Activated CD4-positive, alpha-beta memory T cell treated with anti-CD3 and anti-CD28 coated beads, Interleukin-2, amount 10 ng/mL, durations not matched to agents 7 days and 5 days (primary cell): ENCODE measurements at regions of chr12 and their contacts with region 1.

Region 1: DNA sequence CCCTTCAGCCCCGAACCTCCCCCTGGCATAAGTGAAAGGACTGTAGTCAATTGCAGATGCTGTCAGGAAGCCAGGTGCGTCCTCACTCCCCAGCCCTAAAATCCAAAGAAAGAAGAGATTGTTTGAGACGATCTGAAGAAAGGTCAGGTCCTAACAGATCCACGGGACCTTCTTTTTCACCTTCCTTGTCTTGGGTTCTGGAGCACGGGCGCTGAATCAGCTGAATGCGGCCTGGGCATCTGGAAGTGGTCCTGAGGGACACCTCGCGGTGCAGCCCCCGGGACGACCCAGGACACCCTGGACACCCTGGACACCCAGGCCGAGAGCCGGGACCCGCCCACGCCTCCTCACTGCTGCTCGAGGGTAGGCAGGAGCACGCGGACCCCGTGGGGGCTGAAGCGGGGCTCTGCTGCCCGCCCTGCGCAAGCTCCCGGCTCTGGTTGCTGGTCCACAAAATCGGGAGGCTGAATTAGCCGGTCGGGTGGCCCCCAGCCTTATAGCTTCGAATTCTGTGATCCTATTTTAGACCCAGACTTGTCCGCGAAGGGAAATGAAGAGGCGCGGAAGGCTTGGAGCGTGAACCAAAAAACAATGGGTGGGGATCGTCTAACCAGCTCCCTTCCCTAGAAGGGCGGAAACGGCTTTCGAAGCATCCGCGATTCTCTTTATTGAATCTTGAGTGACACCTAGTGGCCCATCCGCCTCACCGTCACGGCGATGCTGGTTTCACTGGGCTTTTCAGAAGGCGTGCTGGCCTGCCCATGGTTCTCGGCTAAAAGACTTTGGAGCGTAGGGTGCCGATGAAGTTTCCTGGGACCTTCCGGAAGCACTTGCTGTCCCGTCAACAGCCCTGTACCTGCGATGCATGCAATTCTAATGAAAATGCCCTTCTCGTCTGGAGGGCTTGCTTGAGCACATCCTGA is 46.4 kb upstream of the PLXNC1 start:
- DNase-seq: peak; percentile 91
- H3K4me3 Mint-ChIP-seq: peak overlapping the region; percentile 83
- H3K27ac Mint-ChIP-seq: peak overlapping the region; percentile 80
- H3K4me1 Mint-ChIP-seq: peaks cover 43% of the 10 kb centered on the region
- H3K27me3 Mint-ChIP-seq: peaks cover 12% of the 10 kb centered on the region

Region 2: DNA sequence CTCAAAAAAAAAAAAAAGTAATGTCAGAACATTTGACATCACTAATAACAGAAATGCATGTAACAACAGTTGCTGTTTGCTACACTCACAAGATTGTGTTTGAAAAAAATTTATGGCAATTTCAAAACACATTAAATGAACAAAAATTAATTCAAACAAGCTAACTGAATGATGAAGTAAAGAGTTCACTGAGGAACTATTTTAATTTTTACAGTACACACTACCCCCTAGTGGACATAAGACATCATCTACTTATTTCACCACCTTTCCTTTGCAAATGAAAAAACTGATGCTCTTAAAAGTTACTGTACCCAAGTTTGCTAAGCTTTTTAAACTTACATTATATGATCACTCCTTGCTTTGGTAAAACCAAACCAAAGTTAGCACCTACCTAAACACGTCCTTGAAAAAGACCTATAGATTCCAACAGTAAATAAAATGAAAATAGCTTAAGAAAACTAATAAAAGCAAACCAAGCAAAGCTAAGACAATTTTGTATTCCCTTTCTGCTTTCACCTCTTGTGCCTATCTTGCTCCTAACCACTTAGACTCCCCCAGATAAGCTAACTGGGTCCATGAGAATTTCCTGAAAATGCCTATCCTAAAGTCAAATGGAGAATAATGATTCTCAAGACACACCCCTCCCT is 682.5 kb before region 1 on chr12:
- CTCF ChIA-PET with region 1: interaction called, 22 read pairs
- POLR2A ChIA-PET with region 1: interaction called, 6 read pairs
- DNase-seq: no peak
- H3K4me3 Mint-ChIP-seq: no peak overlapping the region
- H3K27ac Mint-ChIP-seq: no peak overlapping the region
- H3K4me1 Mint-ChIP-seq: peaks cover 83% of the 10 kb centered on the region
- H3K27me3 Mint-ChIP-seq: no peaks in the 10 kb centered on the region

Region 3: DNA sequence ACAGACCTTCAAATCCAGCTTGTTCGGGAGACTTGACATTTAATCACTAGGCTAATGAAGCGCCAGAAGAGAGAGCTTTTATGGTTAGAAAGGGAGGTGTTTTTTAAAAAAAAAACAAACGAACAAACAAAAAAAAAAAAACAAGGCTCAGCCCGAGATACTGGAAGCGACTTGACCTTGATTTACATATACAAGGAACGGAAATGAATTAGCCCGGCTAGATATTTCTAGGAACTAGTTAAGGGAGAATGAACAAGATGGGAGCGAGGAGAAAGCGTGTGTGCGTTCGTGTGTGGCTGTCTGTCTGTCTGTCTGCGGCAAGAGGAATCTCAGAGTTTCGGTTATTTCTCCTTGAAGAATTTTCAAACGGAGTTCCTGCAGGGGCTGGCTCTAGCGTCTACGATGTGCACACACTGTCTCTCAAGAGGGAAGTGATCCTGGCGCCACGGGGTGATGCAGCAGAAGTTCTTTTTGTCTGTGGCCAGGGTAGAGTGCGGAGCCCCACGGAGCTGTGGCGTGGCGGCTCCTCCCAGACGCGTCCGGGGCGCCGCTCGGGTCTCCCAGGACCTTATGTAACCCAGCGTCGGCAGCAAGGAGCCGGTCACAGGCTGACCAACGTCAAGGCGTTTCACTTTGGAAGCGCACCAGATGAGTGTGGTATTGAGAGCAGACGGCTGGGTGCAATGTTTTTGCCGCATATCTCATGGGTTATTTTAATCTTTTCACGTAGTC is 510.7 kb before region 1 on chr12:
- CTCF ChIA-PET with region 1: interaction called, 30 read pairs
- POLR2A ChIA-PET with region 1: interaction called, 3 read pairs
- DNase-seq: peak; percentile 52
- H3K4me3 Mint-ChIP-seq: peak overlapping the region; percentile 87
- H3K27ac Mint-ChIP-seq: peak overlapping the region; percentile 61
- H3K4me1 Mint-ChIP-seq: peaks cover 51% of the 10 kb centered on the region
- H3K27me3 Mint-ChIP-seq: peaks cover 32% of the 10 kb centered on the region

Region 4: GRCh38 chr12:93785262-93786010 is 316.6 kb before region 1 on chr12:
- CTCF ChIA-PET with region 1: interaction called, 19 read pairs
- POLR2A ChIA-PET with region 1: interaction called, 7 read pairs
- DNase-seq: peak; percentile 62
- H3K4me3 Mint-ChIP-seq: no peak overlapping the region
- H3K27ac Mint-ChIP-seq: peak overlapping the region; percentile 66
- H3K4me1 Mint-ChIP-seq: peaks cover 42% of the 10 kb centered on the region
- H3K27me3 Mint-ChIP-seq: no peaks in the 10 kb centered on the region

Region 5: DNA sequence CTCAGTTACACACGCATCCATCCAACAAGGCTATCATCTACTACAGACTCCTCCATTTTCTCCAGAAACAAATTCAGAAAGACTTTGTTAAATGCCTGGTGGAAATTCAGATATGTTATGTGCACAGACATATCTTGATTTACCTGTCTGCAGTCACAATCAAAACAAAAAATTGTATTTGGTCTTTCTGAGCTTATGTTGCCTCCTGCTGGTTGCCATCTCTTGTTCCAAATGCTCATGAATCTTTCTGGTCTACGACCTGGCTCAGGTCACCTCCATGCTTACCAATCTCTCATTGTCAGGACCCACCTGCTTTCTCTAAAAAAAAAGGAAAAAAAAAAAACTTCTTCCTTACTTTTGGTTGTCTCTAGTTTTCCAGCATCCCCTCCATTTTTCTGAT is 122.8 kb before region 1 on chr12:
- CTCF ChIA-PET with region 1: interaction called, 84 read pairs
- POLR2A ChIA-PET with region 1: interaction called, 7 read pairs
- DNase-seq: peak; percentile 37
- H3K4me3 Mint-ChIP-seq: no peak overlapping the region
- H3K27ac Mint-ChIP-seq: no peak overlapping the region
- H3K4me1 Mint-ChIP-seq: peaks cover 30% of the 10 kb centered on the region
- H3K27me3 Mint-ChIP-seq: peaks cover 6% of the 10 kb centered on the region

Region 6: DNA sequence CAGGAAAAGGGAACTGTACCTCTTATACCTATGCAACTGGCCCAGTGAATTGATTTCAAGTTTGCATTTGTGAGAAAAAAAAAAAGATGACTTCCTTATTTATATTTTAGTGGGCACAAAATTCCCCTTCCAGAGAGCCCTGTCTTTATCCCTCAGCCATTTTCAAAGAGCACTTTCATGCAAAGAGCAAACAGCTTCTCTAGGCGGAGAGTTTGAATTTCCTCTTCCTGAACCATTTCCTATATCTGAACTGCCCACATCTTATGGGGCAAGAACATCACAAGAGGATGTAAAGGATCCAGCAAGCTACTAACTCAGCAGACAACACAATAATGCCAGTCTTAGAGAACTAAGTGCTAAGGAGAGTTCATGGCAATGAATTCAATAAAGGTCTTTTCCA is 24.1 kb after region 1 on chr12:
- CTCF ChIA-PET with region 1: interaction called, 59 read pairs
- POLR2A ChIA-PET with region 1: interaction called, 12 read pairs
- DNase-seq: no peak
- H3K4me3 Mint-ChIP-seq: peak overlapping the region; percentile 20
- H3K27ac Mint-ChIP-seq: peak overlapping the region; percentile 43
- H3K4me1 Mint-ChIP-seq: peaks cover 59% of the 10 kb centered on the region
- H3K27me3 Mint-ChIP-seq: peaks cover 16% of the 10 kb centered on the region

Region 7: DNA sequence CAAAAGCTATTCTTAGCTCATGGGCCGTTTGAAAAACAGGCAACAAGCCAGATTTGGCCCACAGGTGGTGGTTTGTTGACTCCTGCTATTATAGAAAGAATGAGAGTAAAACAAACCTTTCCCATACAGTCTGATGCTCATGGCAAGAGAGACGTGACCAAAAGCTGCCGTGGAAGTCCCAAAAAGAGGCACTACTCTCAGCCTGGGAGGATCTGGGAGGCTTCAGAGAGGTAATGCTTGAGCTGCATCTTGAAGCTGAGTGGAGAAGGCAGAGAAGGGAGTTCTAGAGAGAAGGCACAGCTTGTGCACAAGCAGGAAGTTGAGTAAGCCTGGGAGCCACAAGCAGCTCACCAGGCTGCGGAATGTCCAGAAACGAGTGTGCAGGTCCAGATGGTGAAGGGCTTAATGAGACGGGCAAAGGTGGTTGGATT is 56.0 kb after region 1 on chr12:
- CTCF ChIA-PET with region 1: no interaction called
- POLR2A ChIA-PET with region 1: no interaction called
- DNase-seq: no peak
- H3K4me3 Mint-ChIP-seq: no peak overlapping the region
- H3K27ac Mint-ChIP-seq: no peak overlapping the region
- H3K4me1 Mint-ChIP-seq: peaks cover 15% of the 10 kb centered on the region
- H3K27me3 Mint-ChIP-seq: peaks cover 7% of the 10 kb centered on the region